ENCODE measurements at regions of chr11 and their contacts with region 1.

Region 1: DNA sequence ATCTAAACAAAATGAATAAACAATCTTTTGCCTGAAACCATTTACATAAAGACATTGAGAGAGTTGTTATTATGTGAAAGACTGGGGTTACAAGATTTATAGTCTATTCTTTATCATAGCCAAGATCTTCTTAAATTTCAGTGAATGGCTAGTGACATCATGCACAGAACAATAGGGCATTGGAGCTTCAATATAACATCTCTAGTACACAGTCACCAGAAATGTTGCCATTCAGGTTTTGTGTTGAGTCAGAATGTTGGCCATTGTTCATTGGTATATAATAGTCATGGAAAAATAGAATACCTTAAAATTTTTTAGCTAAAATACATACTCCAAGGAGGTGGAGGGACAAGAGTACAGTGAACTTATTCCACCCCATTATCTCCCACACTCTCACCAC is 44.3 kb downstream of the SLC5A12 start:
- DNase-seq: no peak
- H3K4me3 ChIP-seq: no peak overlapping the region
- H3K27ac ChIP-seq: no peak overlapping the region
- H3K4me1 ChIP-seq: no peaks in the 10 kb centered on the region
- H3K27me3 ChIP-seq: no peaks in the 10 kb centered on the region
- CTCF ChIP-seq: no peak
- POLR2A ChIP-seq: no peak

Region 2: DNA sequence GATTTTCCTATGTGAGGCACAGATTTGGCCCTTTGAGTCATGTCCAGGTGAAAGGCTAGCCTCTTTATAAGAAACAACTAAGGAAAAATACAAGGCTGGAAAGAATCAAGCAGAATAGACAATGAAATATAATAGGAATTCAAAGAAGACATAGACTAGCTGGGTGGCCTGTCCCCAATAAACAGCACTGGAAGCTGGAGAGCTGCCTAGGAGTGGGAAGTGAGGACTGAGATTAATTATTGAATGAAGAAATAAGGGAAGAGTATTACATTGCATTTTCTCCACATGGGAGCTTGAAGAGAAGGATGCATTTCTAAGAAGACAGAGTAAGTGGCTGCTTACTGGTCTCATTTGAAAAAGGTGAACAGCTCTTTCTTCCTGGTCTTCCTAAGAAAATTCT is 585.5 kb after region 1 on chr11:
- intact Hi-C with region 1: loop called (anchors 5 kb)
- DNase-seq: no peak
- H3K4me3 ChIP-seq: no peak overlapping the region
- H3K27ac ChIP-seq: no peak overlapping the region
- H3K4me1 ChIP-seq: no peaks in the 10 kb centered on the region
- H3K27me3 ChIP-seq: no peaks in the 10 kb centered on the region
- CTCF ChIP-seq: no peak
- POLR2A ChIP-seq: no peak

Measured in breast epithelium (tissue), 4 donors.